ENCODE measurements at regions of chr4 and their contacts with region 1.

Region 1: GRCh38 chr4:60019180-60019579 is 1180.9 kb upstream of the ADGRL3 start:
- DNase-seq: no peak
- ATAC-seq: no peak
- H3K4me3 ChIP-seq: no peak overlapping the region
- H3K27ac ChIP-seq: no peak overlapping the region
- H3K4me1 ChIP-seq: no peaks in the 10 kb centered on the region
- H3K27me3 ChIP-seq: no peaks in the 10 kb centered on the region
- CTCF ChIP-seq: no peak; the same call in 1 of the 2 replicates

Region 2: GRCh38 chr4:59247032-59247431 is 772.1 kb before region 1 on chr4:
- CTCF ChIA-PET with region 1: no interaction called
- POLR2A ChIA-PET with region 1: no interaction called
- intact Hi-C with region 1: loop called (anchors 10 kb)
- DNase-seq: peak; percentile 51
- ATAC-seq: no peak
- H3K4me3 ChIP-seq: no peak overlapping the region
- H3K27ac ChIP-seq: no peak overlapping the region
- H3K4me1 ChIP-seq: no peaks in the 10 kb centered on the region
- H3K27me3 ChIP-seq: no peaks in the 10 kb centered on the region
- CTCF ChIP-seq: peak; percentile 70